Spleen (tissue), 13 donors: ENCODE measurements at regions of chr12 and their contacts with region 1.

Region 1: GRCh38 chr12:124767066-124767821 is 96.4 kb downstream of the SCARB1 start:
- DNase-seq: peak; percentile 95
- H3K4me3 ChIP-seq: no peak overlapping the region
- H3K27ac ChIP-seq: peak overlapping the region in 3 of 8 donors; percentile 26 to 49 (median 41)
- H3K4me1 ChIP-seq: peaks cover 9 to 48% (median 29%) of the 10 kb centered on the region in 6 donors
- H3K27me3 ChIP-seq: peaks cover 0 to 18% (median 0%) of the 10 kb centered on the region in 7 donors
- CTCF ChIP-seq: peak; percentile 97 to 99 (median 99)
- POLR2A ChIP-seq: no peak

Region 2: DNA sequence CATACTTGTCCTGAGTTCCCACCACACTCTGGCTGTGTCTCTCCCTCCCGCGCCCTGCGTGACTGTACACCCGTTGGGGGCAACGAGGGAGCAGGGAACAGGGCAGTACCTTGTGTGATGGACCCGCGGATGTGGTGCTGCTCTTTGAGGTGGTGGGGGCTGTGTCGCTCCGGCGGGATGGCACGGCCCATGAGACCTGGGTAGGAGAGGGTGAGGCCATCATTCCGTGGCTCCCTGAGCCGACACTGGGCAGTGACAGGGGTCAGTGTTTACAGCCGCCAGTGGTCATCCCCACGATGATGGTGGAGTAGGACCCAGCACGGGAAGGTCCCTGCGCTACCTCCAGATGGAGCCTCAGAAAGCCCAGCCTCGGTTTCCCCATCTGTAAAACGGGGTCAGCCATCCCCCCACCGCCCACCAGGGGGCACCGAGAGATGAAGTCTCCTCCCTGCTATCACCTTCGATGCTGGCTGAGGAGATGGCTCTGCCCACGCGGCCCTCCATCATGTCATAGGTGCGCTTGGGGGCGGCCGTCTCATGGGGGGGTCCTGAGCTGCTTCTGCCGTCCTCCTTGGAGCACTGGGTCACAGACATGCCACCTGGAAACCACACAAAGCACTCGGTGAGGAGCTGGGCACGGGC is 419.4 kb before region 1 on chr12:
- intact Hi-C with region 1: loop called (anchors 10 kb)
- DNase-seq: no peak
- H3K4me3 ChIP-seq: no peak overlapping the region
- H3K27ac ChIP-seq: no peak overlapping the region
- H3K4me1 ChIP-seq: peaks cover 0 to 10% (median 7%) of the 10 kb centered on the region in 6 donors
- H3K27me3 ChIP-seq: no peaks in the 10 kb centered on the region
- CTCF ChIP-seq: peak in 10 of 11 experiments; percentile 33 to 71 (median 63)
- POLR2A ChIP-seq: no peak

Region 3: GRCh38 chr12:124567661-124568373 is 199.4 kb before region 1 on chr12:
- intact Hi-C with region 1: loop called (anchors 10 kb)
- DNase-seq: peak; percentile 97
- H3K4me3 ChIP-seq: peak overlapping the region; percentile 24 to 99 (median 70)
- H3K27ac ChIP-seq: peak overlapping the region; percentile 26 to 97 (median 84)
- H3K4me1 ChIP-seq: peaks cover 33 to 59% (median 51%) of the 10 kb centered on the region in 6 donors
- H3K27me3 ChIP-seq: no peaks in the 10 kb centered on the region
- CTCF ChIP-seq: peak in 2 of 11 experiments; percentile 4 to 28
- POLR2A ChIP-seq: no peak

Region 4: GRCh38 chr12:124609041-124609995 is 157.9 kb before region 1 on chr12:
- intact Hi-C with region 1: no loop called
- DNase-seq: peak; percentile 95
- H3K4me3 ChIP-seq: peak overlapping the region in 3 of 8 donors; percentile 2 to 54 (median 12)
- H3K27ac ChIP-seq: peak overlapping the region in 4 of 8 donors; percentile 37 to 68 (median 58)
- H3K4me1 ChIP-seq: peaks cover 15 to 45% (median 30%) of the 10 kb centered on the region in 6 donors
- H3K27me3 ChIP-seq: peaks cover 0 to 12% (median 0%) of the 10 kb centered on the region in 7 donors
- CTCF ChIP-seq: peak in 7 of 11 experiments; percentile 16 to 40 (median 31)
- POLR2A ChIP-seq: no peak

Region 5: GRCh38 chr12:124863416-124864325 is 96.4 kb after region 1 on chr12 and contains the start of gene SCARB1:
- intact Hi-C with region 1: no loop called
- DNase-seq: peak; percentile 95
- H3K4me3 ChIP-seq: peak within 1 kb of the TSS; percentile 65 to 97 (median 84)
- H3K27ac ChIP-seq: peak within 1 kb of the TSS in 6 of 8 donors; percentile 44 to 82 (median 70)
- H3K4me1 ChIP-seq: peaks cover 7 to 54% (median 31%) of the 10 kb centered on the region in 6 donors
- H3K27me3 ChIP-seq: peaks cover 0 to 6% (median 0%) of the 10 kb centered on the region in 7 donors
- CTCF ChIP-seq: peak in 2 of 11 experiments; percentile 12 to 23
- POLR2A ChIP-seq: no peak
- total RNA-seq, gene SCARB1: 22.0 to 59.3 (median 32.6) TPM